ENCODE measurements at regions of chr16 and their contacts with region 1.

Region 1: DNA sequence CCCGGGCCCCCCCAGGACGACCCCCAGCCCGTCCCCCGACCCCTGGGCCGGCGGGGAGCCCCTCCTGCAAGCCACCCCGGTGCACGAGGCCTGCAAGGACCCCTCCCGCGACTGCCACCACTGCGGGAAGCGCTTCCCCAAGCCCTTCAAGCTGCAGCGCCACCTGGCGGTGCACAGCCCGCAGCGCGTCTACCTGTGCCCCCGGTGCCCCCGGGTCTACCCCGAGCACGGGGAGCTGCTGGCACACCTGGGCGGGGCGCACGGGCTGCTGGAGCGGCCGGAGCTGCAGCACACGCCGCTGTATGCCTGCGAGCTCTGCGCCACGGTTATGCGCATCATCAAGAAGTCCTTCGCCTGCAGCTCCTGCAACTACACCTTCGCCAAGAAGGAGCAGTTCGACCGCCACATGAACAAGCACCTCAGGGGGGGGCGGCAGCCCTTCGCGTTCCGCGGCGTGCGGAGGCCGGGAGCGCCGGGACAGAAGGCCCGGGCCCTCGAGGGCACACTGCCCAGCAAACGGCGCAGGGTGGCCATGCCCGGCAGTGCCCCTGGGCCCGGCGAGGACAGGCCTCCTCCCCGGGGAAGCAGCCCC is 15.6 kb upstream of the ZFPM1 start:
- DNase-seq: peak; percentile 83
- CTCF ChIP-seq: peak; percentile 89

Region 2: DNA sequence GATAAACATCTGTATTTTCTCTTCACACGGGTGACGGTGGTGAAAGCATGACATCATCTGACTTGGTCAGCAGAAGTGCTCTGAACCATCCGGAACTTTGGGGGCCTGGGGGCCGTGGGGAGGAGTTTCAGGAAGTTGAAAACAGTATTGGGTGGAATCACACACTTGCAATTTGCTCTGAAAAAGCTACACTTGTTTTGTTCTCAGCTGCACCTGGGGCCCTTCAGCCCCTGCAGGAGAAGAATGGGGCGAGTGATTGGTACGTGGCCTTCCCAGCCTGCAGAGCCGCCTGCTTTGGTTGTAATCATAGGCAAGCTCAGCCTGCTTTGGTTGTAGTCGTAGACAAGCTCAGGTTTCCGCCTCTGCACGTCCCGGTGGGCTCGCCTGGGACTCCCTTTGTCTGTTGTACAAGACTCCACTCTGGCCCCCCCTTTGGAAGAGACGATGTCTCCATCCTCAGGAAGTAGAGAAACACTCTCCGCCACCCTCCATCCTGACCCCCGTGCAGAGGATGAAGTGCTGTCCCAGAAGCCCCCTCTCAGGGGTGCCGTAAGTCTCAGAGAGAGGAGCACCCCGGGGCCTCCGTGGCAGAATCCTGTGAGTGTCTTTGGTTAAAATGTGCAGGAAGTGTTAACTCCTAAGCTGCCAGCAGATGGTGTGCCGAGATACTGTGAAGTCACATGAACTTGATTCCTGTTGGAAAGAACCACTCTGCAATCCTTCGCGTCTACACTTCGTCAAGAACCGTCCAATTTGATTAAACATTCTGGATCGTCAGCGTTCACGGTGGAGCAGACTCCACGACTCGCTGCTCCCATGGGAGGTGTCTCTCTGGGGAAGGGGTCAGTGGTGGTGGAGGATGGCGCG is 480.9 kb before region 1 on chr16:
- CTCF ChIA-PET with region 1: interaction called, 13 read pairs
- POLR2A ChIA-PET with region 1: no interaction called
- DNase-seq: peak; percentile 79
- CTCF ChIP-seq: peak; percentile 59

Region 3: GRCh38 chr16:88194397-88195268 is 242.8 kb before region 1 on chr16:
- CTCF ChIA-PET with region 1: interaction called, 21 read pairs
- POLR2A ChIA-PET with region 1: no interaction called
- DNase-seq: no peak
- CTCF ChIP-seq: no peak

Region 4: GRCh38 chr16:88452482-88453216 is 15.2 kb after region 1 on chr16:
- CTCF ChIA-PET with region 1: interaction called, 22 read pairs
- POLR2A ChIA-PET with region 1: no interaction called
- DNase-seq: peak; percentile 99
- CTCF ChIP-seq: no peak

Measured in GM10248 (cell line).